ENCODE measurements at regions of chr12 and their contacts with region 1.

Region 1: DNA sequence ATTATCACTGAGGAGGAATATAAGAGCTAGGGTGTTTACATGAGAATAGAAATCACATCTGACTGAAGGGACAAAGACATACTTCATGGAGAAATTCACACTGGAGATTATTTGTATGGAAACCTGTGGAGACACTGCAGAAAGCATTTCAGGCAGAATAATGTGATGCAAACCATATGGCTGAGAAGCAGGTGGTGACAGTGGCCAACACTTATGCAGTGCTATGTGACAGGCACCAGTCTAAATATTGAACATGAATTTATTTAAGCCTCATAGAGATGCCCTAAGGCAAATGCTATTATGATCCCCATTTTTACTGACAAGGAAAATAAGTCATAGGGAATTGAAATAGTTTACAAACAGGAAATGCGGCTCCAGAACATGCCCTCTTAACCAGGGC is 16.2 kb downstream of the ALG10B start:
- DNase-seq: no peak
- H3K4me3 ChIP-seq: no peak overlapping the region
- H3K27ac ChIP-seq: no peak overlapping the region
- H3K4me1 ChIP-seq: peaks cover 0 to 4% of the 10 kb centered on the region in 2 donors
- H3K27me3 ChIP-seq: no peaks in the 10 kb centered on the region
- CTCF ChIP-seq: no peak
- POLR2A ChIP-seq: no peak

Region 2: DNA sequence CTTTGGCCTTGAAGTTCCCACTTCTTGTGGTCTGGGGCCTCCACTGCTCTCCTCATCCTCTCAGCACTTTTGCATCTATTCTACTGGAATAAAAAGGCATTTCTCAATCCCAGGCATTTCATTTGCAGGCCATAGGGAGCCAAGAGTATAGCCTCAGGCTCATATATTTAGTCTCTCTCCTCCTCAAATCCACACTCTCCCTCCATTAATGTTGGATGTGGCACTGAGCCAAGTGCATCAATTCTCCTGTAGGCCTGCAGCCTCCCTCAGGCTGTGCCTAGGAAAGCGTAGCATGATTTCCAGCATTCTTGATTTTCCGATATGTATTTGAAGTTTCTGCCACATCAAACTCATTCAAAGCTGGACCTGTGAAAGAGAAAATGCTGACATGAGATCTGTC is 784.1 kb after region 1 on chr12:
- intact Hi-C with region 1: loop called in 1 of 2 experiments (anchors 10 kb)
- DNase-seq: no peak
- H3K4me3 ChIP-seq: no peak overlapping the region
- H3K27ac ChIP-seq: no peak overlapping the region
- H3K4me1 ChIP-seq: no peaks in the 10 kb centered on the region
- H3K27me3 ChIP-seq: no peaks in the 10 kb centered on the region
- CTCF ChIP-seq: no peak
- POLR2A ChIP-seq: no peak

Measured in adrenal gland (tissue), 19 donors.